ENCODE measurements at regions of chr2 and their contacts with region 1.

Region 1: DNA sequence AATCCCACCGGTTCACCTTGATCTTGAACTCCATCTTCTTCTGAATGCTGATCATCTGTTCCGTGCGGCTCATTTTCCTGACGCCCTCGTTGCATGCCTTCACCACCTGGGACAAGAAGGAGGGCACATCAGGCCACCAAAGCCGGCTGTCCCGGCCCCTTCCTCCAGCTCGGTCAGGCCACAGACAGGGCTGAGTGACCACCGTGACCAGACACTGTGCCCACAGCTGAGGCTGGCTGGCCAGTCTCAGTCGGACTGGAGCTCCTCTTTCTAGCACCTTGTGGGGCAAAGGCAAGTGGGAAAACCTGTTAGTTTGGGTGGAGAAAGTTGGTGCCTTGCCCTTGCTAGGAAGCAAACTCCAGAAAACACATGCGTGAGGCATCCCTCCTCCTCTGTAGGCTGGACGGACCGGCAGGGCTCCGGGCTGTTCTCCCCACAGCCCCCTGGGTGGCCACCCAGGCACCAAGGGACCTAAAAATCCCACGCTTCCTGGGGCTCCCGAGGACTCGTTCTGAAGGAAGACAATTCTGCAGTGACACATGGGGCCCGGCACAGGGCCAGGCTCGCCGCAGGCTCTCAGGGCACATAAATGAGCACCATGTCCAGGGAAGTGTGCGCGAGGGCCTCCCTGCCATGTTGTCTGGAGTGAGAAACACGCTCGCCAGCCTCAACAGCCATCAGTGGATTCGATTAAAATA is 15.3 kb downstream of the SNORC start:
- DNase-seq: no peak

Region 2: DNA sequence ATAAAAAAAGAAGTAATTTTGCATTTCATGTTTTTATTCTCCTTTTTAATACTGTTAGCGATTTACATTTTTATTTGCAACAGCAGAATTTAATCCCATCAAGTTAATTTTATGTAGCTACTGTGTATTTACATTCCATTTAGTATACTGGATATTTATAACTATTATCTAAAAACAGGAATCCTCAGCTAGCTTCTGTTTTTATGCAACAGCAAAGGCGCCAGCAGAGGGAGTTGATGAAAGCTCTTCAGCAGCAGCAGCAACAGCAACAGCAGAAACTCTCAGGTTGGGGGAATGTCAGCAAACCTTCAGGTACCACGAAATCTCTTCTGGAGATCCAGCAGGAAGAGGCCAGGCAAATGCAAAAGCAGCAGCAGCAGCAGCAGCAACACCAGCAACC is 41.6 kb before region 1 on chr2:
- intact Hi-C with region 1: loop called in 1 of 2 experiments (anchors 1 kb)
- DNase-seq: no peak

Region 3: GRCh38 chr2:232951891-232952290 is 66.5 kb after region 1 on chr2:
- intact Hi-C with region 1: loop called in 1 of 2 experiments (anchors 1 kb)
- DNase-seq: no peak

Measured in posterior vena cava (tissue), 2 donors.